ENCODE measurements at regions of chr2 and their contacts with region 1.

Region 1: DNA sequence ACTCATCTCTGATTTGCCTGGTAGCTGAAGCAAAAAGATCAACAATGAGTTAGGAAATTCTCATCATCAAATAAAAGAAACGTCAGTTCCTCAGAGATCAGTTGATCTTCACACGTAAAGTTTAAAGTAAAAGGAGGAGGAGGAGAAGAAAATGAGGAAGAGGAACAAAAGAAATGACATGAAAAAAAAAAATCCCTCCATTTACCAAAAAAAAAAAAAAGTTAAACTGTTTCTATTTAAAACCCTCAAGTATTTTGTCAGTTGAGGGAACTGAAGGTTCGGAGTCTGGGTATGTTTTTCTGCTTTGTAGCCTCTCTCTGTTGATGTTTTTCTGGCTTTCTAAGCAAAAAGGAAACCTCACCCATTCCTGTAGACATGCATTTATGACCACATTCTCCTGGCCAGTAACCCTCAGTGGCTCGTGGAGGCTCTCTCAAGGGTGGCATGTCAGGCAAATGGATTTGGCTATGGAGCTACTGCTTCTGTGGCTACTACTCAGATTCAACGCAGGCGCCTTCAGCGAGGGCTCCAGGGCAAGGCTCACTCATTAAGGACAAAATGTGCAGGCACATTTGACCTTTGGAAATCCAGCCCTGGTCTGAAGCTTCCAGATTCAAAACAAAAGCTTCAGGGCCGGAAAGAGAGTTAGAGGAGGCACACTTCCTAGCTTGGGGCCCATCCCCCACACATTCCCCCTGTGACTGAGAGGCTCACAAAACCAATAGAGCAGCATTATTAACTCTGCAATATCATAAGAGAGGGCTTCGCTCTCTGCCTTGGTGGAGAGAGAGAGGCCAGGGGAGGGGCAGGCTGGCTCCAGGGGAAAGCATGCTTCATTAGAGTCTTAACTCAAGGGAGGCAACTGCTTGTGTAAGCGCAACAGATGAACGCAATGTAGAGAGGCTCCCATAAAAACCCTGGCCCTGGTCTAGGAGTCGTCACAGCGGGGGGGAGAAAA is 22.3 kb downstream of the KLF7 start:
- H3K4me3 Mint-ChIP-seq: peak overlapping the region; percentile 61
- H3K27ac Mint-ChIP-seq: peak overlapping the region; percentile 90
- H3K4me1 Mint-ChIP-seq: peaks cover 75% of the 10 kb centered on the region
- H3K27me3 Mint-ChIP-seq: no peaks in the 10 kb centered on the region

Region 2: GRCh38 chr2:207103132-207103531 is 40.4 kb before region 1 on chr2:
- intact Hi-C with region 1: no loop called
- H3K4me3 Mint-ChIP-seq: no peak overlapping the region
- H3K27ac Mint-ChIP-seq: no peak overlapping the region
- H3K4me1 Mint-ChIP-seq: peaks cover 9% of the 10 kb centered on the region
- H3K27me3 Mint-ChIP-seq: no peaks in the 10 kb centered on the region

Region 3: GRCh38 chr2:207230261-207231105 is 87.0 kb after region 1 on chr2:
- intact Hi-C with region 1: loop called (anchors 5 kb)
- H3K4me3 Mint-ChIP-seq: no peak overlapping the region
- H3K27ac Mint-ChIP-seq: peak overlapping the region; percentile 46
- H3K4me1 Mint-ChIP-seq: peaks cover 33% of the 10 kb centered on the region
- H3K27me3 Mint-ChIP-seq: peaks cover 2% of the 10 kb centered on the region

Region 4: GRCh38 chr2:207258263-207258991 is 114.9 kb after region 1 on chr2:
- intact Hi-C with region 1: loop called (anchors 5 kb)
- H3K4me3 Mint-ChIP-seq: no peak overlapping the region
- H3K27ac Mint-ChIP-seq: peak overlapping the region; percentile 31
- H3K4me1 Mint-ChIP-seq: peaks cover 68% of the 10 kb centered on the region
- H3K27me3 Mint-ChIP-seq: no peaks in the 10 kb centered on the region

Measured in dendritic cell treated with granulocyte-macrophage colony-stimulating factor and Interleukin-4, amounts not matched to agents 40 ng/mL and 50 ng/mL, for 4 days (primary cell).